HEK293T (cell line): ENCODE measurements at regions of chr22 and their contacts with region 1.

Region 1: DNA sequence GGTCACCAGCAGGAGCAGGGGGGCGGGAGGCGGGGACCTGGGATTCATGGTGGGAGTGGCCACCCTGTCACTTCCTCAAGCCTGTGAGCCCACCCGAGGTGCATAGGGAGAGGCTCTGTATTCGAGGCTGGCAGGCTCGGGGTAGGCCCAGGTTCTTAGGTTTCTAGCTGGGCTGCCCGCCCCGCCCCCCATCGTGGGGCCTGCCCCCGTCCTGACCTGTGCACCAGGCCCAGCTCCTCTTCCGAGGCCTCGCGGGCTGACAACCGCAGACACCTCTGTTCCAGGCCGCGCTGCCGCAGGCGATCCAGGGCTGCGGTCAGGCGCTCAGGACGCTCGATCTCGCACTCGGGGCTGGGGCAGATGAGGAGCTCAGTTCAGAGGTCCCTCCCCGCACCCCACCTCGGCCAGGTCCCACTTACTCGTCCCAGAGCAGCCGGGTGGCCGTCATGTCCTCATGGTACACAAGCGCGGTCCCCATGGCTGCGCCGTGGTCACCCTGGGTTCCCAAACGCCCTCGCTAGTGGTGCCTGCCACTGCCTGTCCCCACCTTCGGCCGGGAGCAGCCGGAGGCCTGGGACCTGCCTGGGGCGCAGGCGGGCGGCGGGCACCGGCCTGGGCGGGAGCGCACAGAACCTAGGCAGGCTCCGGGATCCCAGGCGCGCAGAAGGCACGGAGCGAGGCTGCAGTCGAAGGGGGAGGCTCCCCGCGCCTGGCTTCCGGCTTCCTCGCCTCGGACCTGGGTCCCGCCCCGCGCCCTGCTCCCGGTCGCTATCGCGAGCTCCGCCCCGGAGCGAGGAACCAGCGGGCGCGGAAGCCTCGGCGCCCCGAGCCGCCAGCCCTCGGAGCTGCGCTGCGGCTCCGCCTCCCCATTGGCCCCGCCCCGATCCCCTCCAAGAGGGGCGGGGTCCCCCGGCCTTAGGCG is at the start of gene HDAC10:
- DNase-seq: peak; percentile 75

Region 2: GRCh38 chr22:50233223-50233622 is 17.6 kb before region 1 on chr22:
- CTCF ChIA-PET with region 1: no interaction called
- POLR2A ChIA-PET with region 1: no interaction called
- DNase-seq: no peak

Region 3: DNA sequence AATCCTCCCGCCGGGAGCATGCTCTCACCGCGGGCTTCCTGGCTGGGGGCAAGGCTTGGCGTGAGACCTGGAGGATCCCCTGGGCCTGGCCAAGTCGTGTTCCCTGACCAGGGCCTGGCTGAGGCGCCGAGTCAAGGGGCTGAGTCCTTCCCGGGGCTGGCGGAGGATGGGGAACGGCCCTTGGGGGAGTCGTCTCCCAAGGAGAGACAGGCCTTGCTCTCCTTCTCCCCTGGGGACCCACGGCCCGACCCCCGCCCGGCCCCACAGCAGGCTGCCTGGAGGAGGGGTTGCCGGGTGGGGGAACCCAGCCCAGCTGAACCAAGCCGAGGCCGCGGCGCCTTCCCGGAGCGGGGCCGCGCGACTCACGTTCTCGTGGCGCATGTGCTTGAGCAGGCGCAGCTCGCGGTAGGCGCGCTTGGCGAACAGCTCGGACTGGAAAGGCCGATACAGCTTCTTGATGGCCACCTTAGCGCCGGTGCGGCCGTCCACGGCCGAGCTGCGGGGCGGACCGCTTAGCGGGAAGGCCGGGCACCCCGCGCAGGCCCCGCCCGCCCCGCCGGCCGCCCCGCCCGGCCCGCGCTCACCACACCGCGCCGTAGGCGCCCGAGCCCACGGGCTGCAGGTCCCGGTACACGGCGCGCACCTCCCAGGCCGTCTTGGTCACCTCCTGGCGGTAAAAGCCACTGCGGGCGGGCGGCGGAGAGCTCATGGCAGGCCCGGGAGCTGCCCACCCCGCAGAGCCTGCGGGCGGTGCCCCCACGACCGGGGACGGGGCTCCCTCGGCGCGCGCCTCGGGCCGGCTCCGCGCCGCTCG is 10.2 kb after region 1 on chr22:
- CTCF ChIA-PET with region 1: interaction called, 4 read pairs
- POLR2A ChIA-PET with region 1: interaction called, 13 read pairs
- DNase-seq: peak; percentile 54